GM23248 (cell line): ENCODE measurements at regions of chr9 and their contacts with region 1.

Region 1: GRCh38 chr9:25964239-25964638 is 286.0 kb upstream of the TUSC1 start:
- DNase-seq: peak; percentile 77
- H3K4me3 ChIP-seq: no peak overlapping the region
- H3K27ac ChIP-seq: no peak overlapping the region
- H3K4me1 ChIP-seq: no peaks in the 10 kb centered on the region
- H3K27me3 ChIP-seq: no peaks in the 10 kb centered on the region

Region 2: DNA sequence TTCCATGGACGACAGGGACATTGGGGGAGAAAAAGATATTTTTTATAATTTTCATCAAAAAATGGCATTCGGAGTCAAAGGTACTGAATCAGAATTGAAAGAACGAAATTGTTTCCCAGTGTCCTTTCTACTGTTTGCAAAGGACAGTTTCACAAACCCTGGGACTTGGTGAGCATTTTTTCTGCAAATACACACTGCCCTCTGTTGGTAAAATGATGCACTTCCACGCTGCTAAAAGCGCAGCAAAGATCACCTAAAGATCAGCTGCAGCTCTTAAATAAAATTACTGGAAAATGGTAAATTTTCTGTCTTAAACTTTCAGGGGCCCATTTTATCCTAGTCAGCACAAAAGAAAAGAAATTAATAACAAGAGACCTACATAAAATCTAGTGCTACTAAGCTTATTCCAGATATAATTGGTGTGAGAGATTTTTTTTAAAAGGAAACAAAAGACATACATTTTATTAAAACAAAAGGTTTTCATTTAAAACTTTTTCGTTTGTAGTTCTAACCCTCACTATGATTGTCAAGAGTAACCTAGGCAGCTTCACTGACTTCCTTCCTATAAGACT is 362.3 kb after region 1 on chr9:
- in situ Hi-C with region 1: loop called (anchors 10 kb)
- DNase-seq: peak; percentile 72
- H3K4me3 ChIP-seq: no peak overlapping the region
- H3K27ac ChIP-seq: no peak overlapping the region
- H3K4me1 ChIP-seq: peaks cover 11% of the 10 kb centered on the region
- H3K27me3 ChIP-seq: no peaks in the 10 kb centered on the region

Region 3: DNA sequence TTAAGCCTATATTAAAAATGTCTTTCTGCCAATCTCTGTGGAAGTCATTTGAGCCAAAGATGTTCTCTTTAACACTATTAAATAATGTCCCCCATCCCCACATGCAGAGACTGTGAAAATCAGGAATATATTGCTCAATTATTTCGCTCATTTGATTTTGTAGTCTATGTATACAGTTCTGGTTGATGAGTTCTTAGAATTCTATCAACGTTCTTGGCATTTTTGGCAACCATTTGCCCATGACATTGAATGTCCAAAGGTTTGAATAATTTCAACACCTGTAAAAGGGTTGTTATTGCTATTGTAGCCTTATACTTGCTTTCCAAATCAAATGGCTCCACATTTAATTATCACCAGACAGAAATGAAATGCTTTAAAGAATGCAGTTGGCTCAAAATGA is 392.3 kb after region 1 on chr9:
- in situ Hi-C with region 1: no loop called
- DNase-seq: no peak
- H3K4me3 ChIP-seq: no peak overlapping the region
- H3K27ac ChIP-seq: no peak overlapping the region
- H3K4me1 ChIP-seq: no peaks in the 10 kb centered on the region
- H3K27me3 ChIP-seq: no peaks in the 10 kb centered on the region

Region 4: GRCh38 chr9:26637101-26637500 is 672.9 kb after region 1 on chr9:
- in situ Hi-C with region 1: loop called (anchors 25 kb)
- DNase-seq: no peak
- H3K4me3 ChIP-seq: no peak overlapping the region
- H3K27ac ChIP-seq: no peak overlapping the region
- H3K4me1 ChIP-seq: no peaks in the 10 kb centered on the region
- H3K27me3 ChIP-seq: no peaks in the 10 kb centered on the region